Right lobe of liver (tissue), 6 donors: ENCODE measurements at regions of chr22 and their contacts with region 1.

Region 1: GRCh38 chr22:40641269-40641668 is 4.8 kb upstream of the MRTFA start:
- DNase-seq: no peak
- ATAC-seq: no peak
- H3K4me3 ChIP-seq: no peak overlapping the region
- H3K27ac ChIP-seq: no peak overlapping the region
- H3K4me1 ChIP-seq: peaks cover 0 to 4% (median 0%) of the 10 kb centered on the region in 4 donors
- H3K27me3 ChIP-seq: no peaks in the 10 kb centered on the region
- CTCF ChIP-seq: no peak
- POLR2A ChIP-seq: no peak

Region 2: GRCh38 chr22:40436505-40437451 is 204.5 kb before region 1 on chr22:
- intact Hi-C with region 1: loop called in 1 of 2 experiments (anchors 5 kb)
- DNase-seq: no peak
- ATAC-seq: peak; percentile 65 to 69 (median 66)
- H3K4me3 ChIP-seq: no peak overlapping the region
- H3K27ac ChIP-seq: no peak overlapping the region
- H3K4me1 ChIP-seq: no peaks in the 10 kb centered on the region
- H3K27me3 ChIP-seq: no peaks in the 10 kb centered on the region
- CTCF ChIP-seq: peak; percentile 57 to 66 (median 60)
- POLR2A ChIP-seq: no peak

Region 3: GRCh38 chr22:40525249-40525884 is 115.9 kb before region 1 on chr22:
- intact Hi-C with region 1: loop called in 1 of 2 experiments (anchors 10 kb)
- DNase-seq: peak in 2 of 3 donors; percentile 43 to 50
- ATAC-seq: peak; percentile 50 to 60 (median 56)
- H3K4me3 ChIP-seq: no peak overlapping the region
- H3K27ac ChIP-seq: no peak overlapping the region
- H3K4me1 ChIP-seq: peaks cover 0 to 10% (median 4%) of the 10 kb centered on the region in 4 donors
- H3K27me3 ChIP-seq: no peaks in the 10 kb centered on the region
- CTCF ChIP-seq: peak; percentile 40 to 71 (median 68)
- POLR2A ChIP-seq: no peak

Region 4: DNA sequence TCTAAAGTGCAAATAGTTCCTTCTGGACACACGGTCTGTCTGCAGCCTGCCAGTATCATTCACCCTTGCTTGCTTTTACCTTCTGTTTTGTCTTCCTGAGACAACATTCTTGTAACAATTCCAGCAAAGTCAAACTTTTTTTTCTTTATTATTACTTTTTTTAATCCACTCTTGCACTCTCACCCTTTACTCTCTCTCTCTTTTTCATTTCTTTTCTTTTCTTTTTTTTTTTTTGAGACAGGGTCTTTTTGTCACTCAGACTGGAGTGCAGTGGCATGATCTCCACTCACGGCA is 91.7 kb after region 1 on chr22:
- intact Hi-C with region 1: no loop called
- DNase-seq: no peak
- ATAC-seq: no peak
- H3K4me3 ChIP-seq: no peak overlapping the region
- H3K27ac ChIP-seq: peak overlapping the region in 1 of 3 donors; percentile 21
- H3K4me1 ChIP-seq: peaks cover 0 to 10% (median 5%) of the 10 kb centered on the region in 4 donors
- H3K27me3 ChIP-seq: no peaks in the 10 kb centered on the region
- CTCF ChIP-seq: no peak
- POLR2A ChIP-seq: no peak